ENCODE measurements at regions of chr1 and their contacts with region 1.

Region 1: GRCh38 chr1:211382714-211383480 is 56.3 kb downstream of the TRAF5 start:
- DNase-seq: peak; percentile 89
- ATAC-seq: peak; percentile 96
- H3K4me3 ChIP-seq: peak overlapping the region; percentile 75 to 92 (median 88)
- H3K4me3 Mint-ChIP-seq: peak overlapping the region; percentile 89
- H3K27ac ChIP-seq: peak overlapping the region; percentile 96 to 98
- H3K27ac Mint-ChIP-seq: peak overlapping the region; percentile 100
- H3K4me1 ChIP-seq: peaks cover 13 to 14% of the 10 kb centered on the region in 2 donors
- H3K4me1 Mint-ChIP-seq: peaks cover 22% of the 10 kb centered on the region
- H3K27me3 ChIP-seq: no peaks in the 10 kb centered on the region
- H3K27me3 Mint-ChIP-seq: no peaks in the 10 kb centered on the region
- CTCF ChIP-seq: no peak

Region 2: DNA sequence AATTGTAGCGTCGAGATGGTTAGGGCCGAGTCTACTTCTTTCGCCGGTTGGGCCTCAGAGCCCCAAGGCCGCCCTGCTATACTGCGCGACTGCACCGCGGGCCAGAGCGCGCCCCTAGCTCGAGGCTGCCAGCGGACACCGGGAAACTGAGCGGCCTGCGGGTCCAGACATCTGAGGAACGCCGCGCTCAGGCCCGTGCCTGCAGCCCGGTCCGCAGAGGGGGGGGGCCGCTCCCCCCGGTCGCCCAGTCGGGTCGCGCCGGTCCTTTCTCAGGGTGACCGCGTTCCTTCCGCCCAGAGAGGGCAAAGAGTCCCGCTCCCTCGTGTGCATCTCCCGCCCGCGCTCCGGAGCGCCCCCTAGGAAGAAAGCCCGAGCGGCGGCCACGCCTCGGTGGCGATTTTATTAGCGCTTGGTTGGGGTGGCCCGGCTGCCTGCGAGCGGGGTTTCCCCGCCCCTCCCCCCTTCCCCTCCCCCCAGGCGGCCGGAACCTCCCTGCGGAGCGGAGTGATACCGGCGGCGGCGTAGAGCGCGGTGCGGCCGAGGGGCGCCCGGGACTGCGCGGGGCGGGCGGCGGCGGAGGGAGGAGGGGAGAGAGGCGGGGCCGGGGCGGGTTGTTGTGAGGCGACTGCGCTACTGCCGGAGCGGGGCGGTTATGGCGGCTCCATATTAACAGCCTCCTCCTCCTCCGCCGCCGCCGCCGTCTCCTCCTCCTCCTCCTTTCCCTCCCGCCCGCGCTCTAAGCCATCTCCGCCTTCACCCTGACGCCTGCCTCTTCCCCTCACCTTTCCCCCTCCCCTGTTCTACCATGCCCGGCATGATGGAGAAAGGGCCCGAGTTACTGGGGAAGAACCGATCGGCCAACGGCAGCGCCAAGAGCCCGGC is 123.9 kb before region 1 on chr1 and contains the start of gene RCOR3:
- CTCF ChIA-PET with region 1: no interaction called
- POLR2A ChIA-PET with region 1: no interaction called
- intact Hi-C with region 1: loop called (anchors 2 kb)
- DNase-seq: peak; percentile 93
- ATAC-seq: peak; percentile 74
- H3K4me3 ChIP-seq: peak within 1 kb of the TSS; percentile 81 to 93 (median 90)
- H3K4me3 Mint-ChIP-seq: peak within 1 kb of the TSS; percentile 92
- H3K27ac ChIP-seq: peak within 1 kb of the TSS; percentile 88 to 90
- H3K27ac Mint-ChIP-seq: peak within 1 kb of the TSS; percentile 96
- H3K4me1 ChIP-seq: peaks cover 11 to 16% of the 10 kb centered on the region in 2 donors
- H3K4me1 Mint-ChIP-seq: peaks cover 15% of the 10 kb centered on the region
- H3K27me3 ChIP-seq: no peaks in the 10 kb centered on the region
- H3K27me3 Mint-ChIP-seq: no peaks in the 10 kb centered on the region
- CTCF ChIP-seq: peak; percentile 84
- total RNA-seq, gene RCOR3: 120 and 124 TPM in 2 replicates

Region 3: GRCh38 chr1:211335522-211336157 is 47.3 kb before region 1 on chr1:
- CTCF ChIA-PET with region 1: interaction called, 3 read pairs
- POLR2A ChIA-PET with region 1: no interaction called
- intact Hi-C with region 1: loop called (anchors 2 kb)
- DNase-seq: peak; percentile 80
- ATAC-seq: peak; percentile 85
- H3K4me3 ChIP-seq: peak overlapping the region; percentile 17 to 54 (median 39)
- H3K4me3 Mint-ChIP-seq: peak overlapping the region; percentile 62
- H3K27ac ChIP-seq: peak overlapping the region; percentile 90 to 92
- H3K27ac Mint-ChIP-seq: peak overlapping the region; percentile 84
- H3K4me1 ChIP-seq: peaks cover 98 to 100% of the 10 kb centered on the region in 2 donors
- H3K4me1 Mint-ChIP-seq: peaks cover 92% of the 10 kb centered on the region
- H3K27me3 ChIP-seq: no peaks in the 10 kb centered on the region
- H3K27me3 Mint-ChIP-seq: no peaks in the 10 kb centered on the region
- CTCF ChIP-seq: no peak

Region 4: GRCh38 chr1:211420389-211420788 is 37.5 kb after region 1 on chr1:
- CTCF ChIA-PET with region 1: interaction called, 4 read pairs
- POLR2A ChIA-PET with region 1: no interaction called
- intact Hi-C with region 1: loop called (anchors 1 kb)
- DNase-seq: no peak
- ATAC-seq: no peak
- H3K4me3 ChIP-seq: no peak overlapping the region
- H3K4me3 Mint-ChIP-seq: no peak overlapping the region
- H3K27ac ChIP-seq: no peak overlapping the region
- H3K27ac Mint-ChIP-seq: no peak overlapping the region
- H3K4me1 ChIP-seq: no peaks in the 10 kb centered on the region
- H3K4me1 Mint-ChIP-seq: peaks cover 8% of the 10 kb centered on the region
- H3K27me3 ChIP-seq: no peaks in the 10 kb centered on the region
- H3K27me3 Mint-ChIP-seq: no peaks in the 10 kb centered on the region
- CTCF ChIP-seq: no peak

Region 5: GRCh38 chr1:211830330-211831142 is 447.6 kb after region 1 on chr1 and contains the start of gene LPGAT1:
- CTCF ChIA-PET with region 1: no interaction called
- POLR2A ChIA-PET with region 1: no interaction called
- intact Hi-C with region 1: loop called (anchors 2 kb)
- DNase-seq: peak; percentile 86
- ATAC-seq: peak; percentile 85
- H3K4me3 ChIP-seq: peak within 1 kb of the TSS; percentile 48 to 85 (median 72)
- H3K4me3 Mint-ChIP-seq: peak within 1 kb of the TSS; percentile 94
- H3K27ac ChIP-seq: peak within 1 kb of the TSS; percentile 39 to 80
- H3K27ac Mint-ChIP-seq: peak within 1 kb of the TSS; percentile 91
- H3K4me1 ChIP-seq: peaks cover 44 to 49% of the 10 kb centered on the region in 2 donors
- H3K4me1 Mint-ChIP-seq: peaks cover 58% of the 10 kb centered on the region
- H3K27me3 ChIP-seq: no peaks in the 10 kb centered on the region
- H3K27me3 Mint-ChIP-seq: no peaks in the 10 kb centered on the region
- CTCF ChIP-seq: peak; percentile 76
- total RNA-seq, gene LPGAT1: 60.1 and 63.8 TPM in 2 replicates

Measured in B cell (primary cell).